Heart left ventricle (tissue), 16 donors: ENCODE measurements at regions of chr7 and their contacts with region 1.

Region 1: DNA sequence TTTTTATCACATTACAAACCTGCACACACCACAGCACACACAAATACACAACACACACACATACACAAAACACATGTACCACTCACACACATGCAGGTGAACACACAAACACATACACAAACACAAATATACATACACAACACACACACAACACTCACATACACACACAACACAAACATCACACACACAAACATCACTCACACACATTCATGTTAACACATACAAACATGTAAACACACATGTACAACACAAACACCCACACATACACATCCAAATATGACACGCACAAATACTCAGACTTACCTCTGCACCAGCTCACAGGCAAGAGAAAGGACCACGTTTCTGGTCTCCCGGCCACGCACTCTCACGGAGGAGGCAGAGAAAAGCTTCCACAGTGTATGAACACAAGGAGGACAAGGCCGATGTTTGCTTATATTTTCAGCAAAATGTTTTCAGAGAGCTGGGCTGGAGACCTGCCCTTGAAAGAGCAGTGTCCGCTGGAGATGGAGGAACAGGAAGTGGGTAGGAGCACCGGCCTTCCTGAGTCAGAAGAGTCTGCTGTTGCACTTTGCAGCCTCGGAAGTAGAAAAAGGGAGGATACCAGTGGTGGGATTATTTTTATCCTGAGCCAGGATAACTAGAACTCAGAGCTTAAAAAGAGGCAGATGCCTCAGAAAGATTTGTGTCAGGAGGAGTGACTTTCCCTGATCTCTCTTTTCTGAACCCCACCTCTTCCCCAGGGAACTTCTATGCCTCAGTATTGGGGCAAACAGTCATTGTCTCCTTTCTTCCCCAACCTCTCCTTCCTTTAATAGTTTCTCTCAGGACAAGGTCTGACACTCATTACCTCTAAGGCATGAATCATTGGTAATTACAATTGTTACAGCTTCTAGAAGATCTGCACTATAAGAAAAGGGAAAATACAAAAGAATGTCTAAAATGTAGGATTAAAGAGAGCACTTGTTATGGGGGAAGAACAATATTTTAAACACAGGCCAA is at the start of gene GIMAP6:
- DNase-seq: peak in 4 of 5 donors; percentile 45 to 56 (median 52)
- ATAC-seq: peak in 3 of 4 donors; percentile 22 to 38 (median 30)
- H3K4me3 ChIP-seq: peak within 1 kb of the TSS; percentile 26 to 69 (median 54)
- H3K27ac ChIP-seq: peak within 1 kb of the TSS; percentile 63 to 96 (median 93)
- H3K4me1 ChIP-seq: peaks cover 0 to 61% (median 35%) of the 10 kb centered on the region in 12 donors
- H3K27me3 ChIP-seq: no peaks in the 10 kb centered on the region
- CTCF ChIP-seq: no peak
- POLR2A ChIP-seq: no peak
- total RNA-seq, gene GIMAP6: 20.3 to 52.7 (median 24.4) TPM

Region 2: GRCh38 chr7:150448789-150449147 is 183.4 kb before region 1 on chr7:
- intact Hi-C with region 1: loop called in 8 of 10 experiments (anchors 1 to 5 kb)
- DNase-seq: peak; percentile 83 to 90 (median 85)
- ATAC-seq: peak in 3 of 4 donors; percentile 36 to 58 (median 57)
- H3K4me3 ChIP-seq: peak overlapping the region in 3 of 12 donors; percentile 0 to 74 (median 30)
- H3K27ac ChIP-seq: peak overlapping the region; percentile 75 to 97 (median 88)
- H3K4me1 ChIP-seq: peaks cover 0 to 46% (median 15%) of the 10 kb centered on the region in 12 donors
- H3K27me3 ChIP-seq: no peaks in the 10 kb centered on the region
- CTCF ChIP-seq: peak; percentile 87 to 95 (median 90)
- POLR2A ChIP-seq: no peak

Region 3: DNA sequence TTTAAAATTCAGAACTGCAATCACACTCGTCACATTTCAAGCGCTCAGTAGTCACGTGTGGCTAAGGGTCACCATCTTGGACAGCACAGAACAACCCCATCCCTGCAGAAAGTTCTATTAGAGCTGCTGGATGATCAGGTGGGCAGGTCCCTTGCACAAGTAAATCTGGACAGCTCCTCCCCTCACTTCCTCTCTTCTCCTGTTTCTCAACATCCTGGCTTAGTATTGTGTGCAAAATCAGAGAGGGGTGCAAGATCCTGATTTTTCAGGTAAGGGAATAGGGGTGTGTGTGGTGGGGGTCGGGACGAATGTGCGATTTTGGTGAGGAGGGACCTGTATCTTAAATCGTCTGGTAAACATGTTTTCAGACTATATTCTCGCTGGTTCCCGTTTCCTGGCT is 65.0 kb before region 1 on chr7 and contains the start of gene GIMAP4:
- intact Hi-C with region 1: loop called in 1 of 10 experiments (anchors 5 kb)
- DNase-seq: peak in 1 of 5 donors; percentile 44
- ATAC-seq: peak; percentile 68 to 85 (median 80)
- H3K4me3 ChIP-seq: peak within 1 kb of the TSS; percentile 35 to 82 (median 60)
- H3K27ac ChIP-seq: peak within 1 kb of the TSS; percentile 74 to 93 (median 88)
- H3K4me1 ChIP-seq: peaks cover 0 to 45% (median 8%) of the 10 kb centered on the region in 12 donors
- H3K27me3 ChIP-seq: no peaks in the 10 kb centered on the region
- CTCF ChIP-seq: no peak
- POLR2A ChIP-seq: peak in 1 of 2 donors; percentile 43
- total RNA-seq, gene GIMAP4: 25.1 to 80.2 (median 35.2) TPM

Region 4: DNA sequence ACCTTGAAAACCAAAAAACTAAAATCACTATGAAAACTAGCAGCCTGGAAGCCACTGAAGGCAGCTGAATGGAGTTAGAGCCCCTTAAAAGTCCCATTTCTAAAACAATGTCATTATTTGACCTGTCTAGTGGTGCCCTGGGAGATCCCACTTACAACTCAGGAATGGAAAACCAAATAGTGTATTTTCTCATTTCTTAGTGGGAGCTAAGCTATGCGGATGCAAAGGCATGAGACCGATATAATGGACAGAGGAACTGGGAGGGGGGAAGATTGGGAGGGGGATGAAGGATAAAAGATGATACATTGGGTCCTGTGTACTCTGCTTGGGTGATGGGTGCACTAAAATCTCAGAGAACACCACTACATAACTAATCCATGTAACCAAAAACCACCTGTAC is 43.5 kb after region 1 on chr7:
- intact Hi-C with region 1: loop called in 2 of 10 experiments (anchors 5 to 10 kb)
- DNase-seq: no peak
- ATAC-seq: no peak
- H3K4me3 ChIP-seq: peak overlapping the region in 2 of 12 donors; percentile 5 to 34
- H3K27ac ChIP-seq: peak overlapping the region; percentile 53 to 94 (median 70)
- H3K4me1 ChIP-seq: peaks cover 0 to 40% (median 7%) of the 10 kb centered on the region in 12 donors
- H3K27me3 ChIP-seq: no peaks in the 10 kb centered on the region
- CTCF ChIP-seq: no peak
- POLR2A ChIP-seq: no peak

Region 5: GRCh38 chr7:150716368-150716767 is 84.2 kb after region 1 on chr7 and contains the start of gene GIMAP1:
- intact Hi-C with region 1: loop called in 4 of 10 experiments (anchors 1 to 5 kb)
- DNase-seq: peak; percentile 57 to 76 (median 71)
- ATAC-seq: peak; percentile 72 to 93 (median 85)
- H3K4me3 ChIP-seq: peak within 1 kb of the TSS; percentile 28 to 80 (median 60)
- H3K27ac ChIP-seq: peak within 1 kb of the TSS; percentile 77 to 97 (median 90)
- H3K4me1 ChIP-seq: peaks cover 0 to 49% (median 6%) of the 10 kb centered on the region in 12 donors
- H3K27me3 ChIP-seq: no peaks in the 10 kb centered on the region
- CTCF ChIP-seq: no peak
- POLR2A ChIP-seq: peak in 1 of 2 donors; percentile 68
- total RNA-seq, gene GIMAP1: 3.4 to 9.2 (median 5.8) TPM

Region 6: DNA sequence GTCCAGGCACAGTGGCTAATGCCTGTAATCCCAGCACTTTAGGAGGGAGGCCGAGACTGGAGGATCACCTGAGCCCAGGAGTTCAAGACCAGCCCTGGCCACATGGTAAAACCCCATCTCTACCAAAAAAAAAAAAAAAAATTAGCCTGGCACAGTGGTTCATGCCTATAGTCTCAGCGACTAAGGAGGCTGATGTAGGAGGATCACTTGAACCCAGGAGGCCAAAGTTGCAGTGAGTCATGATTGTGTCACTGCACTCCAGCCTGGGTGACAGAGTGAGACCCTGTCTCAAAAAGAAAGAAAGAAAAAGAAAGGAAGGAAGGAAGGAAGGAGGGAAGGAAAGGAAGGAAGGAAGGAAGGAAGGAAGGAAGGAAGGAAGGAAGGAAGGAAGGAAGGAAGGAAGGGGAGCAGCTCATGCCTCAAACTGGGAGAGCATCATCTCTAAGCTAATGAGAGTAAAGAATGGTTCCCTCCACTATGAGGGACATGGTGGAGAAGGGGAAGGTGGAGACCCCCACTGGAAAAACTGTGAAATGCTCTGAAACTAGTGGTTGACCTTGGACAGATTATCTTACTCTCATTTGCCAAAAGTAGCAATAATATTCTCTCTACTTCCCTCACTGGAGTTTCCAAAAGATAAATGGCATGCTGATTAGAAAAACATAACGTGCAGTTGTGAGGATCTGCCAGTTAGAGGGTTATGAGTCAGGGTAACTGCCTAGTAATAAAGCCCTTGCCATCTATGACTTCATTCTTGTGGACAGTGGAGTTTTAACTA is 121.8 kb after region 1 on chr7:
- intact Hi-C with region 1: loop called in 4 of 10 experiments (anchors 5 kb)
- DNase-seq: no peak
- ATAC-seq: peak; percentile 26 to 60 (median 41)
- H3K4me3 ChIP-seq: no peak overlapping the region
- H3K27ac ChIP-seq: peak overlapping the region in 9 of 12 donors; percentile 24 to 90 (median 81)
- H3K4me1 ChIP-seq: peaks cover 0 to 61% (median 41%) of the 10 kb centered on the region in 12 donors
- H3K27me3 ChIP-seq: no peaks in the 10 kb centered on the region
- CTCF ChIP-seq: peak in 9 of 12 donors; percentile 23 to 57 (median 44)
- POLR2A ChIP-seq: no peak